ENCODE measurements at regions of chr17 and their contacts with region 1.

Region 1: DNA sequence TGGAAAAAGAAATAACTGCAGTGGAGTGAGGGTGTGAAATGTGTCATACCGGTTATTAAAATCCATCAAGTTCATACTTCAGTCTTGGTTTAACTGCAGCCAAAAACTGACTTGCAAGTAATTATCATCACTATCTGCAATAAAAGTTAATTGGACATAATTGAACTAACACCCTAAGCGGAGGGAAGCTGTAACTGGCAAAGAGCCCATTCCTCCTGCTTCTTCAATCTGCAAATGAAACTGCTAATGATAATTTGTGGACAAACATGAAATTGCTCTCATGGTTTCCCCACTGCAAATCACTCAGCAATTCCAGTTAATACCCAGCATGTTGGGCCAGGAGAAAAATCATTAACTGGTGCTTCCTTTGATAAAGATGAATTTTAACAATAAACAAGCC is 46.5 kb downstream of the FAM222B start:
- DNase-seq: no peak
- CTCF ChIP-seq: no peak

Region 2: GRCh38 chr17:28812091-28812747 is 16.2 kb after region 1 on chr17:
- CTCF ChIA-PET with region 1: interaction called, 14 read pairs
- POLR2A ChIA-PET with region 1: no interaction called
- DNase-seq: peak; percentile 99
- CTCF ChIP-seq: no peak

Region 3: DNA sequence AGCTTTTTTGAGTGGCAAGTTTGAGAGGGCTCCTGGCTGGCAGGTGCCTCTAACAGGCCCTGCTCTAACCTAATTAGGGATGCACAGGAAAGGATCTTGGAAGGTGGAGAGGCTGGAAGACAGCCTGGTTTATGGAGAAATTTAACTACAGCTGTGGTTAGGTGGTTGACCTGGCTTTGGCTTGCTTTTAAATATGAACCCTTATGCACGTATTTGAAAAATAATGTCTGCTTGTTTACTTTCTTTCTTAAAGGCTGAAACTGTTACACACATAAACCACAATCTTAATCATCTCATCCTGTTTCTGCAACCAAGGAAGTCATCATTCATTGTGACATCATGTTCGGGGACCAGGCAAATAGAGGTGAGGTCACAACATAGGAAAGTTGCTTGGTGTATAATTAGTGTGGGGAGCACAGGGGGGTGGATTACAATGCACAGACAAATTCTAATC is 129.9 kb after region 1 on chr17:
- CTCF ChIA-PET with region 1: no interaction called
- POLR2A ChIA-PET with region 1: no interaction called
- DNase-seq: peak; percentile 51
- CTCF ChIP-seq: no peak